ENCODE measurements at regions of chr6 and their contacts with region 1.

Region 1: DNA sequence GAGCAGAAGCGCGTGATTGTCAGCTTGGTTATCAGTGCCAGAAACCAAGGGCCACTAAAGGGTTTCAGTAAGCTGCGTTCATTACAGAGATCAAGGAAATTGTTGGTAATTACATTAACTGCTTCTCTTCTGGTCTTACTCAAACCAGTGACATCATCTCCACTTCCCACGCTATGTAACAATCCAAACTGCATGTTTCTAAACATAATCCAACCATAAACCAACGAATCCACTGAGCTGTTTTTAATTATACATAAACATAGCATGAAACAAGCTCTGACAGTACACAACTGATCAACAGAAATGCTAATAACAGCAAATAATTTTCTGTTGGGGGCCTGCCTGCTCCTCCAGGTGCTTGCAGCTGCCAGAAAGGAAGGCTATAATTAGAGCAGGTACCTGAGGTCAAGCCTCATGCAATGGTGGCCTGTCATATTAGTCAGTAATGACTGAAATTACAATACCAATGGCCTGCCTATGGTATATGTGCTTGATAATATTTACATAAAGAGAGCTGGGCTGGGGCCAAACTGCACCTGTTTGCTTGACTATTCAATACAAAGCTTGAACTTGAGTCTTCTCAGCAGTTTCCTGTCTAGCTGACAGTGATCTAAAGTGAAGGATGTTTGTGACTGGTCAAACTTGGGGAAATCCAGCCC is 40.1 kb downstream of the ILRUN start:
- DNase-seq: peak; percentile 76
- H3K4me3 Mint-ChIP-seq: peak overlapping the region; percentile 78
- H3K27ac Mint-ChIP-seq: peak overlapping the region; percentile 90
- H3K4me1 Mint-ChIP-seq: peaks cover 36% of the 10 kb centered on the region
- H3K27me3 Mint-ChIP-seq: no peaks in the 10 kb centered on the region

Region 2: DNA sequence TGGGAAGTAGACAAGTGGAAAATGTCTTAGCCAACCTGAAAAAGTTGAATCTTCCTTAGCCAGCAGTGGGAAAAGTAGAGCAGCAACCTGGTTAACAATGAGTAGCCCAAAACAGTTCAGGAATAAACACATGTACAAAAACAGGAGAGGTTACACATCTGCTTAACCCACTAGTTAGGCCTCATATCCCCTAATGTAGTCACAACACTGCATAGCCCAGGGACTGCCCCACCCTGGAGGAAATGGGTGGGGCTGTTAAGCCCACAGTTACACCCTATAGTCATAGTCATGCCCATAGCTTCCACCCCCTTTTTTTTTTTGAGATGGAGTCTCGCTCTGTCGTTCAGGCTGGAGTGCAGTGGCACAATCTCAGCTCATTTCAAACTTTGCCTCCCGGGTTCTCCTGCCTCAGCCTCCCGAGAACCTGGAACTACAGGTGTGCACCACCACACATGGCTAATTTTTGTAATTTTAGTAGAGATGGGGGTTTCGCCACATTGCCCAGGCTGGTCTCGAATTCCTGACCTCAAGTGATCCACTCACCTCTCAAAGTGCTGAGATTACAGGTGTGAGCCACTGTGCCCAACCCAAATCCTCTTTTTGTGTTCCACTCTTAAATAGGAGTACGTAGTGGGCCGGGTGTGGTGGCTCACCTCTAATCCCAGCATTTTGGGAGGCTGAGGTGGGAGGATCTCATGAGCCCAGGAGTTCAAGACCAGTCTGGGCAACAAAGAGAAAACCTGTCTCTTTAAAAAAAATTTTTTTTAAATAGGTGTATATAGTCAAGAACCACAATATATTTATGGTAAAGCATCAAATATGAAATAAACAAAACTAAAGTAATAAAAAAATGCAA is 15.5 kb after region 1 on chr6:
- intact Hi-C with region 1: loop called (anchors 1 kb)
- DNase-seq: peak; percentile 93
- H3K4me3 Mint-ChIP-seq: peak overlapping the region; percentile 81
- H3K27ac Mint-ChIP-seq: peak overlapping the region; percentile 95
- H3K4me1 Mint-ChIP-seq: peaks cover 47% of the 10 kb centered on the region
- H3K27me3 Mint-ChIP-seq: no peaks in the 10 kb centered on the region

Region 3: DNA sequence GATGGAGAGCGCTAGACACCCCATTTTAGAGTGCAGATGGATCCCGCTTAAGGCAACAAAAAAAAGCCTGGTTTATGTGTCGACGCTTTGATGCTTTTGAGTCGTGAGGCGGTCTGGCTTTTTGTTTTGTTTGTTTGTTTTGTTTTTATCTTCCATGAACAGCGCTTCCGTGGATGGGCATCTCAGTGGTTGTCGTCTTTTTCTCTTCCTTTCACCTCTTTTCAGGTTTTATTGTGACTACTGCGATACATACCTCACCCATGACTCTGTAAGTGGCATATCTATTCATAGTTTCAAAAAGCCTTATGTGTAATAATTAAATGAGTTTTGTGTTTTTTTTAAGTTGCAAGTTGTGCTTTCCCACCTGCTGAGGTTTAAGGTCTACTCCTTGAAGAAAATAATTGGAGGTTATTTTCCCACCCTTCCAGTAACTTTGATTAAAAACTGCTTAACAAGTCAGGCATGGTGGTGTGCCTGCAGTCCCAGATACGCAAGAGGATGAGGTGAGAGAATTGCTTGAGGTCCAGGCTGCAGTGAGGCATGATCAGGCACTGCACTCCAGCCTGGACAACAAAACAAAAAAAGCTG is 101.3 kb after region 1 on chr6:
- intact Hi-C with region 1: loop called (anchors 2 kb)
- DNase-seq: no peak
- H3K4me3 Mint-ChIP-seq: no peak overlapping the region
- H3K27ac Mint-ChIP-seq: no peak overlapping the region
- H3K4me1 Mint-ChIP-seq: peaks cover 7% of the 10 kb centered on the region
- H3K27me3 Mint-ChIP-seq: no peaks in the 10 kb centered on the region

Region 4: DNA sequence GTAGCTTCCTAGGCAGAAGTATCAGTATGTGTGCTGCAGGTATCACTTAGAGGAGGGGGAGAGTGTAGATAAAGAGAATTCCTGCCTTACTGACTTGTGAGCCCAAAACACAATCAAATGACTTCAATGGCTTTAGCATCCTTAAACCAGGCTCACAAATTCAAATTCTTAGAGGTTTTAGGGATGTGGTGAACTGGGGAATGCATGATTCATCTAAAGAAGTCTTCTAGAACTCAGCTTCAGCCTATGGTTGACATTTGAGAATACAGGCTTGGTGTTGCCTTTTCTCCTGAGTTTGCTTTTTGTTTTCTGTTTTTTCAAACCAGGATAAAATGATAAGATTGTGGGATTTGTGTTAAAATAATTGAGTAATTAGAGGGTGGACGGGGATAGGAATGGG is 115.2 kb after region 1 on chr6:
- intact Hi-C with region 1: no loop called
- DNase-seq: no peak
- H3K4me3 Mint-ChIP-seq: no peak overlapping the region
- H3K27ac Mint-ChIP-seq: peak overlapping the region; percentile 9
- H3K4me1 Mint-ChIP-seq: peaks cover 9% of the 10 kb centered on the region
- H3K27me3 Mint-ChIP-seq: no peaks in the 10 kb centered on the region